Activated CD4-positive, alpha-beta T cell treated with anti-CD3 and anti-CD28 coated beads for 36 hours (primary cell): ENCODE measurements at regions of chr1 and their contacts with region 1.

Region 1: GRCh38 chr1:213122514-213122929 is 71.5 kb downstream of the RPS6KC1 start:
- DNase-seq: no peak
- ATAC-seq: no peak
- H3K4me3 Mint-ChIP-seq: no peak overlapping the region
- H3K27ac Mint-ChIP-seq: no peak overlapping the region
- H3K4me1 Mint-ChIP-seq: peaks cover 8% of the 10 kb centered on the region
- H3K27me3 Mint-ChIP-seq: no peaks in the 10 kb centered on the region

Region 2: DNA sequence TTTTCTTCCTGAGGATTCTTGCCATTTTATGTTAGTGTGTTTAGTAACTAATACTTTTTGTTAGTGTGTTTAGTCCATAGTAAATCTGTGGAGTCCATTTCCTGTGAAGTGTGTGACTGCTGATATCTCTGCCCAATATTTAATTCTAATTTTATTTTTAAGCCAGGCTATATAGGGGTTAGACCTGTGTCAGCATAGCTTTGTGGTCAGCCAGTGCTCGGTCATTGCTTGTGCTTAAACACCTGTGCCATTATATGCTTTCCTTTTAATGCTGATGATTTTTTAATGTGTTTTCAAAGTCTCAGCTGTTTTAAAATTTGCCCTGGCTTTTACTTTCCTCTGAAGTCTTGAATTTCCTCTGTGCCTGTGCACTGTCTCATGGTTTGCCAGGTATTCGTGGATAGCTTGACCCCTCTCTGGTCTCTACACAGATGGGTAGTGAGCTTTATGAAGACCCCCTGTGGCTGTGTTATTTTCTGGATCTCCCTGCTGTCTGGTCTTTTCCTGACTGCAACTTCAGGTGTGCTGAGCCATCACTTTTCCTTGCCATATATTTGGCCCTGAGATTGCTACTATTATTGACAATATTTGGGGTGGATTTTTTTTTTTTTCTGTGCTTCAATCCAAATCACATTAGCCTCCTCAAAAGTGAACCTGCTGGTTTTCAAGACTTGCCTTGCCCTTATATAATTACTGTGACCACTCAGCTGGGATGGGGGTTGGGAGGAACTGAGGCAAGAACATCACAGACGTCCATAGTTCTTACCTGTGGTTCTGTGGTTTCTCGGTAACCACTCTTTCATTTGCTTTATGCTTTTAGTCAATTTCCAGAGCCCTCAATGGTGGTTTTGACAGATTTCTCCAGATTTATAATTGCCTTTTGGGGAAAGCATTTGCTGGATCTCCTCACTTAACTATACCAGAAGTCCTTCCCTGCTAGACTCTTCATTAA is 11.9 kb before region 1 on chr1:
- CTCF ChIA-PET with region 1: interaction called, 11 read pairs
- POLR2A ChIA-PET with region 1: no interaction called
- intact Hi-C with region 1: no loop called
- DNase-seq: peak; percentile 13
- ATAC-seq: no peak
- H3K4me3 Mint-ChIP-seq: no peak overlapping the region
- H3K27ac Mint-ChIP-seq: no peak overlapping the region
- H3K4me1 Mint-ChIP-seq: peaks cover 10% of the 10 kb centered on the region
- H3K27me3 Mint-ChIP-seq: no peaks in the 10 kb centered on the region

Region 3: DNA sequence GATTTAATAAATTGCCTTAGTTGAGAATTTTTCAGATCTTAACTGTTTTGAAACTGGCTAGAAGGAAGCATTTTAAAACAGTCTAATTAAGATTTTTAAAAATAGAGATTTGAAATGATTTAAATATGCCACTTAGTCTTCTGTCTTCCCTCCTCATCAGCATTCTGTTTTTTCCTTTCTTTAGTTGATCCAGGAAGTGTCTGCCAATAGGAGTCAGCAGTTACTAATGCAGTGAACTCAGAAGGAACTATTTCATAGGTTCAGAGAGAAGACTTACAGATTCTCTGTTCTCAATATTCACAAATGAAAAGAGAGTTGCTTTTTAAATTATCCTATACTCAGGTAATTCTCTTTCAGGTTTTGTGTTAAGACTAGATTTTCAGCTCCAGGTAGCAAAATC is 13.1 kb after region 1 on chr1:
- CTCF ChIA-PET with region 1: interaction called, 12 read pairs
- POLR2A ChIA-PET with region 1: no interaction called
- intact Hi-C with region 1: no loop called
- DNase-seq: no peak
- ATAC-seq: no peak
- H3K4me3 Mint-ChIP-seq: no peak overlapping the region
- H3K27ac Mint-ChIP-seq: no peak overlapping the region
- H3K4me1 Mint-ChIP-seq: peaks cover 4% of the 10 kb centered on the region
- H3K27me3 Mint-ChIP-seq: no peaks in the 10 kb centered on the region

Region 4: DNA sequence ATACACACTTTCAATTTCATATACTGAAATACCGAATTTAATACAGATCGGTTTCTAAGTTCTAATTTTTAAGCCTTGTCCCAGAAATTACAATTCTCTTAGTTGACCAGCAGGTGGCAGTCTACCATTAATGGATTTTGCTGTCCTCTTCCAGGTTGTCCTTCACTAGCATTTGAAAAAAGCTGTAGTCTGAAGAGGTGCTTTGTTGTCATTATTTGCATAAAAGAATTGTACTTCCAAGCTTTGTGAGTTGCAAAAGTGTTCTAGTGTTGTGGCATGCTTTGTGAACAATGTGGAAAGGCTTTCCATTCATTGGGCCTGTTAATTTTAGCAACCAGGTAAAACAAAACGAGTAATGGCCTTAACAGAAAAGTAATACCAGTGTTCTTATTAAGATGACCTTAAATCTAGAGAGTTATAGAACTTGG is 122.2 kb after region 1 on chr1:
- CTCF ChIA-PET with region 1: interaction called, 3 read pairs
- POLR2A ChIA-PET with region 1: no interaction called
- intact Hi-C with region 1: loop called in 1 of 2 experiments (anchors 5 kb)
- DNase-seq: peak; percentile 36
- ATAC-seq: no peak
- H3K4me3 Mint-ChIP-seq: no peak overlapping the region
- H3K27ac Mint-ChIP-seq: no peak overlapping the region
- H3K4me1 Mint-ChIP-seq: no peaks in the 10 kb centered on the region
- H3K27me3 Mint-ChIP-seq: no peaks in the 10 kb centered on the region

Region 5: DNA sequence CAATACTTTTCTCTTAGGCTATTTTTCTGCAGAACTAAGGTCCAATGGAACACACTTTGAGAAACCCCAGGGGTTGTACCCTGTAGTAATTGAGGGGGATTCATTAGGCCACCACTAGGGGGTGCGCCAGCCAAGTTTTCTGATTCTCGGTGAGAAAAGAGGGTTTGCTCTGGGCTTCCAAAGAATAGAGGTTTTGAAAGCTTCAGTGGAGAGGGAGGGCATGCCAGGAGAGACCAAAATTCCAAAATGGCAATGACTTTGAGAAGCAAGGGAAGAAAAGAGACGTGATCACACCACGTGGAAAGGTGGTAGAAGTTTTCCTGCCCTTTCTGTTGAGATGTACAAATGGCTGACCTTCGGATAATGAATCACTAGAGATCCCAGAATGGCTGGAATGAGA is 251.8 kb after region 1 on chr1:
- CTCF ChIA-PET with region 1: interaction called, 4 read pairs
- POLR2A ChIA-PET with region 1: no interaction called
- intact Hi-C with region 1: loop called in 1 of 2 experiments (anchors 5 kb)
- DNase-seq: peak; percentile 82
- ATAC-seq: peak; percentile 60
- H3K4me3 Mint-ChIP-seq: no peak overlapping the region
- H3K27ac Mint-ChIP-seq: no peak overlapping the region
- H3K4me1 Mint-ChIP-seq: no peaks in the 10 kb centered on the region
- H3K27me3 Mint-ChIP-seq: no peaks in the 10 kb centered on the region

Region 6: GRCh38 chr1:214123061-214123784 is 1000.7 kb after region 1 on chr1:
- CTCF ChIA-PET with region 1: interaction called, 3 read pairs
- POLR2A ChIA-PET with region 1: no interaction called
- intact Hi-C with region 1: loop called (anchors 2 to 10 kb)
- DNase-seq: peak; percentile 42
- ATAC-seq: peak; percentile 57
- H3K4me3 Mint-ChIP-seq: no peak overlapping the region
- H3K27ac Mint-ChIP-seq: no peak overlapping the region
- H3K4me1 Mint-ChIP-seq: peaks cover 8% of the 10 kb centered on the region
- H3K27me3 Mint-ChIP-seq: peaks cover 2% of the 10 kb centered on the region